ENCODE measurements at regions of chr20 and their contacts with region 1.

Region 1: GRCh38 chr20:2101865-2102584 is 398 bp downstream of the STK35 start:
- DNase-seq: peak; percentile 68 to 95
- H3K4me3 ChIP-seq: peak overlapping the region; percentile 84 to 96
- H3K27ac ChIP-seq: peak overlapping the region; percentile 99
- H3K4me1 ChIP-seq: peaks cover 0 to 25% of the 10 kb centered on the region in 2 donors
- H3K27me3 ChIP-seq: no peaks in the 10 kb centered on the region
- CTCF ChIP-seq: no peak

Region 2: DNA sequence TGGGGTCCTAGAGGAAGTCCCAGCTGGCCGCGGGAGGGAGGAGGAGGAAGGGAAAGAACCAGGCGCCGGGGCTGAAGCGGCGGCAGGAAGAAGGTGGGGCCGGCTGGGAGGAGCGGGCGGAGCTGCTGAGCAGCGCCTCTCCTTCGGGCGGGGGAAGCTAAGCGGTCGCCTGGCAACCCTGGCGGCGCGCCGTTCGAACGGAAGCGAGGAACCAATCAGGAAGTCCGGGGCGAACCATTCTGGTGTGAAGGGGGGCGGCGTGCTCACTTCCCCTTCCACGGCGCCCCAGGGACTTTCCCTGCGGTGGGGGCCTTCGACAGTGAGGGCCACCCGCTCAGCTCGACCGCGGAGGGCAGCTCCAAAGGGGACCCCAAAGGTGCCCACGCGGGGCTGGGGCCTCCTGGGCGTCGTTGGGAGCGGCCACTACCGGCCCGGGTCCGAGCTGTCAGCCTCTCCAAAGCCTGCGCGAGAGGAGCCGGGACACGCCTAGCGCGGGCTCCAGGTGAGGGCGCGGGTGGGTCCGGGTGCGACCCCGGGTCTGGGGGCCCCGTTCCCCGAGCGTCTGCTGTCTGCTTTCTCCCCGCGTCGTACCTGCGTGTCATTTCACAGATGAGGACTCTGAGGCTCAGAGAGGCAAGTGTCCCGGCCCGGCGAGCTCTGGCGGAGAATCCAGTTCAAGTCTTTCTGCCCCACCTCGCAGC is 1268.4 kb before region 1 on chr20 and contains the start of gene FAM110A:
- intact Hi-C with region 1: loop called (anchors 10 kb)
- DNase-seq: peak; percentile 87 to 97
- H3K4me3 ChIP-seq: peak within 1 kb of the TSS; percentile 90
- H3K27ac ChIP-seq: peak within 1 kb of the TSS; percentile 72 to 78
- H3K4me1 ChIP-seq: peaks cover 4 to 17% of the 10 kb centered on the region in 2 donors
- H3K27me3 ChIP-seq: no peaks in the 10 kb centered on the region
- CTCF ChIP-seq: no peak
- total RNA-seq, gene FAM110A: 9.7 TPM

Region 3: GRCh38 chr20:1776681-1777475 is 325.1 kb before region 1 on chr20:
- intact Hi-C with region 1: loop called (anchors 5 kb)
- DNase-seq: peak; percentile 41 to 93
- H3K4me3 ChIP-seq: peak overlapping the region; percentile 60 to 74
- H3K27ac ChIP-seq: no peak overlapping the region
- H3K4me1 ChIP-seq: peaks cover 0 to 8% of the 10 kb centered on the region in 2 donors
- H3K27me3 ChIP-seq: no peaks in the 10 kb centered on the region
- CTCF ChIP-seq: peak; percentile 71 to 83 (median 82)

Region 4: GRCh38 chr20:1894951-1895673 is 206.9 kb before region 1 on chr20 and contains the start of gene SIRPA:
- intact Hi-C with region 1: loop called (anchors 2 kb)
- DNase-seq: peak in 1 of 2 donors; percentile 84
- H3K4me3 ChIP-seq: peak within 1 kb of the TSS; percentile 80 to 97
- H3K27ac ChIP-seq: peak within 1 kb of the TSS; percentile 97
- H3K4me1 ChIP-seq: peaks cover 6 to 66% of the 10 kb centered on the region in 2 donors
- H3K27me3 ChIP-seq: no peaks in the 10 kb centered on the region
- CTCF ChIP-seq: no peak
- total RNA-seq, gene SIRPA: 72.8 TPM

Region 5: GRCh38 chr20:2255926-2256531 is 154.0 kb after region 1 on chr20:
- intact Hi-C with region 1: no loop called
- DNase-seq: no peak
- H3K4me3 ChIP-seq: no peak overlapping the region
- H3K27ac ChIP-seq: no peak overlapping the region
- H3K4me1 ChIP-seq: no peaks in the 10 kb centered on the region
- H3K27me3 ChIP-seq: no peaks in the 10 kb centered on the region
- CTCF ChIP-seq: no peak

Region 6: GRCh38 chr20:2470423-2471193 is 368.6 kb after region 1 on chr20 and contains the start of gene SNRPB:
- intact Hi-C with region 1: loop called (anchors 2 kb)
- DNase-seq: peak; percentile 88 to 99
- H3K4me3 ChIP-seq: peak within 1 kb of the TSS; percentile 76 to 81
- H3K27ac ChIP-seq: peak within 1 kb of the TSS; percentile 94 to 96
- H3K4me1 ChIP-seq: peaks cover 4 to 18% of the 10 kb centered on the region in 2 donors
- H3K27me3 ChIP-seq: no peaks in the 10 kb centered on the region
- CTCF ChIP-seq: no peak
- total RNA-seq, gene SNRPB: 83.5 TPM

Region 7: DNA sequence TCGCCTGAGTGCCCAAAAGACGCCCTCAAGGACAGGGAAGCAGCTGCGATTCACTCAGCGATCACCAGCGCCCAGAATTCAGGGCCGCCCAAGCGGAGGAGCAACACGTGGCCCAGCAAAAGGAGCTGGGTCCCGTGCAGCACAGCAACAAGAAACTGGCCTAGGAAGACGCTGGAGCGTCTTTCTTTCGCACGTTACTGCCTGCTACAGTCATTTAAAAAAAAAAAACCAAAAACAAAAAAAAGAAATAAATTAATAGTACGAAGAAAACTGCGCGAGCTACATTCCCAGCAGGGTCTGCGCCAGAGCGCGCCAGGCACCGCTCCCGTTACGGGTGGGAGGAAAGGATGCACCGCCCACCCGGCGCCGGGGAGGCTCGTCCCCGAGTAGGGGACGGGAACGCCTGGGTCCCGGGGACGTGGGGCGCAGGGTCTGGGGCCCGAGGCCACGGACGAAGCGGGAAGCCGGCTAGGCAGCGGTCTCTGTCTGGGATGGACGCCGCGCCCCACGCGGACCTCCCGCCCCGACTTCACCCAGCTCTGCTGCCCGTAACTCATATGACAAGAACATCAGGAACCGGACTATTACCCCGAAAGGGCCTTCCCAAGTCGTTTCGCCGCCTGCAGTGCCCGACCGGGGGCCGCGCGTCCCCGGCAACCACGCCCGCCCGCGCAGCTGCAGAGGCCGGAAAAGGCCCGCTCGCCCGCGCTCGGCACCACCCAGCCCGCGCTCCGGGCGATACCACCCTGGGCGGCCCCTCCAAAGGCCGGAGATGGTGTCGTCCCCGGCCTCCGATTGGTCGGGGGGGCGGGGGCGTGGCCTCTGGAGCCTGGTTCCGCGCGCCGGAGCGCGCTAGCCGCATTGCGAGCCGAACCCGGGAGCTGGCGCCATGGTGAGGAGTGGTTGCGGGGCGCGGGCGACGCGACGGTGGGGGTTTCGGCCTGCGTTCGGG is 550.0 kb after region 1 on chr20 and contains the start of gene NOP56:
- intact Hi-C with region 1: loop called (anchors 5 kb)
- DNase-seq: peak; percentile 48 to 94
- H3K4me3 ChIP-seq: peak within 1 kb of the TSS; percentile 69 to 87
- H3K27ac ChIP-seq: peak within 1 kb of the TSS; percentile 81 to 82
- H3K4me1 ChIP-seq: peaks cover 9 to 15% of the 10 kb centered on the region in 2 donors
- H3K27me3 ChIP-seq: no peaks in the 10 kb centered on the region
- CTCF ChIP-seq: no peak
- total RNA-seq, gene NOP56: 32.1 TPM